B cell (primary cell): ENCODE measurements at regions of chr11 and their contacts with region 1.

Region 1: DNA sequence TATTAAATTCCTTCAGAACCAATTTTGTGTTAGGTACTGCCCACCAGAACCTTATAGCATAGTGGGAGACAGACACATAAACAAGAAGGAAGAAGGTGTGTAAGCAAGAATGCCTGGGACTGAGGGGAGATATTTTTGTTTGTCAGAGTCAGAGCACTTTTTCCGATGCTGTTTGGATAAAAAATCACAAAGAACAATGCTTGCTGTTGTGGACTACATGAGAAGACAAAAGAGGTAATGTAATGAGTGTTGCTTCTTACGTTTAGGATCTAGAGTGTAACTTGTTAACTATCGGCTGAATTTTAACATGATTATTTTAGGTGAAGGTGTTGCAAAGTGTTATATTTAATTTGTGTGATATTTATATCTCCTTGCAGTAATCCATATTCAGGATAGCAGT is 84.9 kb downstream of the ATM start:
- DNase-seq: no peak
- ATAC-seq: no peak
- H3K4me3 ChIP-seq: no peak overlapping the region
- H3K4me3 Mint-ChIP-seq: no peak overlapping the region
- H3K27ac ChIP-seq: no peak overlapping the region
- H3K27ac Mint-ChIP-seq: no peak overlapping the region
- H3K4me1 ChIP-seq: no peaks in the 10 kb centered on the region
- H3K4me1 Mint-ChIP-seq: no peaks in the 10 kb centered on the region
- H3K27me3 ChIP-seq: no peaks in the 10 kb centered on the region
- H3K27me3 Mint-ChIP-seq: no peaks in the 10 kb centered on the region
- CTCF ChIP-seq: no peak

Region 2: DNA sequence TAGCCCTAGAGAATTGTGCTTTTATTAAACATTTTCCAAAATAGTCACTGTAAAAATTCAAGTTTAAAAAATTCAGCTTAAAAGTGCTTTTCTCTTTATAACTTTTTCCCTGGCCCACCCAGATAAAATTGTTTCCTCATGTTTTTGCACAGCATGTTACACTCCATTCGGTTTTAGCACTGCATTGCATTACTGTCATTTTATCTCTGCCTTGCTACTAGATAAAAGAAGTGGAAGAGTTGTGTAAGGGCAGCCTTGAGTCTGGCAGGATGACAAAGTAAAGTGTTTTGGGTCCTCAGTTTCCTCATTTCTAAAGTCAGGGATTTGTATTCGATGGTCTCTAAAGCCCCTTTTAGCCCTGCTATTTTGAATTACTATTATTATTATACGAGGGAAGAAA is 14.9 kb after region 1 on chr11:
- CTCF ChIA-PET with region 1: no interaction called
- POLR2A ChIA-PET with region 1: no interaction called
- intact Hi-C with region 1: loop called (anchors 2 kb)
- DNase-seq: no peak
- ATAC-seq: no peak
- H3K4me3 ChIP-seq: no peak overlapping the region
- H3K4me3 Mint-ChIP-seq: no peak overlapping the region
- H3K27ac ChIP-seq: no peak overlapping the region
- H3K27ac Mint-ChIP-seq: no peak overlapping the region
- H3K4me1 ChIP-seq: no peaks in the 10 kb centered on the region
- H3K4me1 Mint-ChIP-seq: no peaks in the 10 kb centered on the region
- H3K27me3 ChIP-seq: no peaks in the 10 kb centered on the region
- H3K27me3 Mint-ChIP-seq: no peaks in the 10 kb centered on the region
- CTCF ChIP-seq: no peak

Region 3: GRCh38 chr11:108697872-108698473 is 390.2 kb after region 1 on chr11:
- CTCF ChIA-PET with region 1: no interaction called
- POLR2A ChIA-PET with region 1: no interaction called
- intact Hi-C with region 1: no loop called
- DNase-seq: peak; percentile 72
- ATAC-seq: peak; percentile 81
- H3K4me3 ChIP-seq: no peak overlapping the region
- H3K4me3 Mint-ChIP-seq: no peak overlapping the region
- H3K27ac ChIP-seq: no peak overlapping the region
- H3K27ac Mint-ChIP-seq: no peak overlapping the region
- H3K4me1 ChIP-seq: no peaks in the 10 kb centered on the region
- H3K4me1 Mint-ChIP-seq: no peaks in the 10 kb centered on the region
- H3K27me3 ChIP-seq: no peaks in the 10 kb centered on the region
- H3K27me3 Mint-ChIP-seq: no peaks in the 10 kb centered on the region
- CTCF ChIP-seq: peak; percentile 95

Region 4: DNA sequence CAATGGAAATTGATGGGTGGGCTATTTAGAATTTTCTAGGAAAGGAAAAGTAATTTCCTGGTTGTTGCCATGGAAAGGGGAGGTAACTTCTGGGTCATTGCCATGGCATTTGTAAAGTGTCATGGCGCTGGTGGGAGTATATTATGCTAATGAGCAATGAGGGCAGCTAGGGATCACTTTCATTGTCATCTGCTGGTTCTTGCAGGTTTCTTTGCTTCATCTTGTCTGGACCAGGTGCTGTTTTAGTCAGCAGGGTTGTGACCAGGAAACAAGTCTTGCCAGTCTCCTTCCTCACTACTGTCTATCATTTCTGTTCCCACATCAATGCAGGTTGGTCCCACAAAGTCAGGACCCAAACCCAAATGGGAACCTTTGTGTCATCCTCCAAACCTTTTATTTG is 876.6 kb after region 1 on chr11:
- CTCF ChIA-PET with region 1: no interaction called
- POLR2A ChIA-PET with region 1: no interaction called
- intact Hi-C with region 1: no loop called
- DNase-seq: no peak
- ATAC-seq: no peak
- H3K4me3 ChIP-seq: no peak overlapping the region
- H3K4me3 Mint-ChIP-seq: no peak overlapping the region
- H3K27ac ChIP-seq: no peak overlapping the region
- H3K27ac Mint-ChIP-seq: no peak overlapping the region
- H3K4me1 ChIP-seq: no peaks in the 10 kb centered on the region
- H3K4me1 Mint-ChIP-seq: no peaks in the 10 kb centered on the region
- H3K27me3 ChIP-seq: no peaks in the 10 kb centered on the region
- H3K27me3 Mint-ChIP-seq: no peaks in the 10 kb centered on the region
- CTCF ChIP-seq: no peak